IMR-90 (cell line): ENCODE measurements at regions of chr17 and their contacts with region 1.

Region 1: GRCh38 chr17:2608350-2608919 is 15.0 kb downstream of the PAFAH1B1 start:
- DNase-seq: no peak
- ATAC-seq: no peak
- H3K4me3 ChIP-seq: no peak overlapping the region
- H3K27ac ChIP-seq: no peak overlapping the region
- H3K4me1 ChIP-seq: peaks cover 4% of the 10 kb centered on the region; the same call in 1 of the 2 replicates
- H3K27me3 ChIP-seq: no peaks in the 10 kb centered on the region
- CTCF ChIP-seq: no peak
- POLR2A ChIP-seq: no peak
- RAD21 ChIP-seq: no peak

Region 2: GRCh38 chr17:2624292-2624731 is 15.9 kb after region 1 on chr17:
- CTCF ChIA-PET with region 1: interaction called, 3 read pairs
- POLR2A ChIA-PET with region 1: interaction called, 11 read pairs
- dilution Hi-C with region 1: no loop called
- in situ Hi-C with region 1: no loop called
- intact Hi-C with region 1: no loop called
- DNase-seq: no peak
- ATAC-seq: no peak
- H3K4me3 ChIP-seq: no peak overlapping the region
- H3K27ac ChIP-seq: no peak overlapping the region
- H3K4me1 ChIP-seq: peaks cover 2% of the 10 kb centered on the region; the same call in 1 of the 2 replicates
- H3K27me3 ChIP-seq: no peaks in the 10 kb centered on the region
- CTCF ChIP-seq: no peak
- POLR2A ChIP-seq: no peak
- RAD21 ChIP-seq: no peak

Region 3: GRCh38 chr17:2647957-2648356 is 39.5 kb after region 1 on chr17:
- CTCF ChIA-PET with region 1: no interaction called
- POLR2A ChIA-PET with region 1: no interaction called
- dilution Hi-C with region 1: no loop called
- in situ Hi-C with region 1: no loop called
- intact Hi-C with region 1: loop called (anchors 5 kb)
- DNase-seq: no peak
- ATAC-seq: no peak
- H3K4me3 ChIP-seq: no peak overlapping the region
- H3K27ac ChIP-seq: no peak overlapping the region
- H3K4me1 ChIP-seq: no peaks in the 10 kb centered on the region
- H3K27me3 ChIP-seq: no peaks in the 10 kb centered on the region
- CTCF ChIP-seq: no peak
- POLR2A ChIP-seq: no peak
- RAD21 ChIP-seq: no peak

Region 4: GRCh38 chr17:2965563-2966235 is 357.3 kb after region 1 on chr17:
- CTCF ChIA-PET with region 1: no interaction called
- POLR2A ChIA-PET with region 1: no interaction called
- dilution Hi-C with region 1: no loop called
- in situ Hi-C with region 1: no loop called
- intact Hi-C with region 1: no loop called
- DNase-seq: peak; percentile 74
- ATAC-seq: peak; percentile 97
- H3K4me3 ChIP-seq: no peak overlapping the region
- H3K27ac ChIP-seq: peak overlapping the region; percentile 7; the same call in 1 of the 2 replicates
- H3K4me1 ChIP-seq: peaks cover 6% of the 10 kb centered on the region
- H3K27me3 ChIP-seq: no peaks in the 10 kb centered on the region
- CTCF ChIP-seq: no peak
- POLR2A ChIP-seq: no peak
- RAD21 ChIP-seq: no peak